Left ventricle myocardium inferior (tissue), 1 donor: ENCODE measurements at regions of chr11 and their contacts with region 1.

Region 1: DNA sequence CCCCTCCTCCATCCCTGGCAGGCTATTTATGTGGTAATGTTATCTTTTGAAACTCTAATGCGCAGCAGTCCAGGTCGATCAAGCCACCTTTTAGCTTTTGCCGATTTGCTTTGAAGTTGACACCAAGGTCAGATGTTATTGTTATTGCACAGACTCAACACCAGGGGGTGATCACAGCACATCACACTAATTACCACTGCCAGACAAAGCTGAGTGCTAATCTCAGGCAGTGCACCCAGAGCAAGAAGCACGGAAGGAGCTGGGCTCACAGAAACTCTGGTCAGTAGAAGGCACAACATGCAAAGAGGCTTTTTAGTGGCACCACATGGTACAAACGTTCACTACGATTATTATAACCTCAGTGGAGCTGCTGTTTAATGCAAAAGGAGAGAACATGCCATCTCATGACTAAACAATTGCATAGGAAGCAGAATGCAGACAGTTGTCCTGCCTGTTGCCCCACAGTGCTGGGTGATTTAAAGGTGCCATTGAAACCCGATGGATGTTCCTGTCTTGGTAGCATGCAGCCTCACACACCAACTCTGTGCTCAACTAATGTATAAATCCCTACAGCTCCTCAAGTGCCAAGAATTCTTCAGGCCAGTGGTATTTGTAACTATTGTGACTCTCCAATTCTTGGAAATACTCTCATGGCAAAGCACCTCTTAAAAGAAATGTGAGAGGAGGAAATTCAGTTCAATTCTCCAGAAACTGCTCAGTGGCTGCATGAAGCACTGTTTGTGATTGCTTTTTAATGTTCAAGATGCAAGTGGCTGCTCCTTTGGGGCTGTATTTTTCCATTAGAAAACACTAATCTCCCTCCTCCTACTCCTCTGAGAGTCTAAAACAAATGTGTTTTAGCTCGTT is 353.9 kb upstream of the DDI1 start:
- DNase-seq: peak; percentile 19
- H3K4me3 ChIP-seq: no peak overlapping the region
- H3K27ac ChIP-seq: peak overlapping the region; percentile 43
- H3K4me1 ChIP-seq: peaks cover 13% of the 10 kb centered on the region
- H3K27me3 ChIP-seq: no peaks in the 10 kb centered on the region
- CTCF ChIP-seq: peak; percentile 88

Region 2: DNA sequence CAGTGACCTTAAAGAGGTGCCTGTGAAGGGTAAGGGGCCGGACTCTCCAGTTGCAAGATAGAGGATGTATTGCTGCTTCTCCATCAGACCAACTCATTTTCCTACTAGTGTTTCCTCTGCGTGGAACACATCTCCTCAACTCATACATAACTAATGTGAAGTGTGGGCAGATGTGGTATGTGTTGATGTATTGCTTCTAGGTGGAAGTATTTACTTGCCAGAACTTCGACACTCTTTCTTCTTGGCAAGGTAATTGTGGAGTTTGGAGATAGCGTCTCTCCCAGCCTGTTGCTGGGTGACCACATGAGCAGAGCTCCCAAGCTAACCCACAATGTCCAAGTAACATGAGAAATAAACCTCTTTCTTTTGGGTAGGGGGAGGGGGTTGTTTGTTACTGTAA is 116.4 kb before region 1 on chr11:
- intact Hi-C with region 1: no loop called
- DNase-seq: no peak
- H3K4me3 ChIP-seq: no peak overlapping the region
- H3K27ac ChIP-seq: no peak overlapping the region
- H3K4me1 ChIP-seq: no peaks in the 10 kb centered on the region
- H3K27me3 ChIP-seq: no peaks in the 10 kb centered on the region
- CTCF ChIP-seq: no peak

Region 3: GRCh38 chr11:104151404-104152204 is 469.1 kb after region 1 on chr11:
- intact Hi-C with region 1: loop called (anchors 5 kb)
- DNase-seq: no peak
- H3K4me3 ChIP-seq: no peak overlapping the region
- H3K27ac ChIP-seq: no peak overlapping the region
- H3K4me1 ChIP-seq: peaks cover 11% of the 10 kb centered on the region
- H3K27me3 ChIP-seq: no peaks in the 10 kb centered on the region
- CTCF ChIP-seq: peak; percentile 57